Heart left ventricle (tissue), 16 donors: ENCODE measurements at regions of chr12 and their contacts with region 1.

Region 1: GRCh38 chr12:131290255-131290959 is 336.7 kb downstream of the ADGRD1 start:
- DNase-seq: no peak
- ATAC-seq: no peak
- H3K4me3 ChIP-seq: no peak overlapping the region
- H3K27ac ChIP-seq: no peak overlapping the region
- H3K4me1 ChIP-seq: no peaks in the 10 kb centered on the region
- H3K27me3 ChIP-seq: peaks cover 0 to 3% (median 0%) of the 10 kb centered on the region in 9 donors
- CTCF ChIP-seq: no peak
- POLR2A ChIP-seq: no peak

Region 2: DNA sequence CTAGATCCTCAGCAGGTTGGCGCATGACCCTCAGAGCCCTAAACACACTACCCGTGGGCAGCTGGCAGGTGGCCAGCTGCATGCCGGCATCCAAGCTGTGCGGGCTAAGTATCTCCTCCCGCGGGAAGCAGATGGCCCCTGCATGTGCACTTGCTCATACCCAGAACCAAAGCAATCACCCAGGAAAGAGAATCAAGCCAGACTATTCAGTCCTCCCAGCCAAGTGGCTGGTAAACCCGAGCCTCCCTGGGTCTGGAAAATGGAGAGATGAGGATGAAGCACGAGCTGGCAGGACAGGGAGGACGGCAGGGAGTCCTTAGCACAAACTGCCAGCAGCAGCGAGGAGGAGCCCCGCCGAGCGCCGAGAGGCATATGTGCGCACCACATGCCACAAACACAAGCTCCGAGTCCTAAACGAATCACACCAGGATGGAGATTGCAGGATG is 714.0 kb before region 1 on chr12:
- intact Hi-C with region 1: no loop called
- DNase-seq: no peak
- ATAC-seq: no peak
- H3K4me3 ChIP-seq: no peak overlapping the region
- H3K27ac ChIP-seq: no peak overlapping the region
- H3K4me1 ChIP-seq: no peaks in the 10 kb centered on the region
- H3K27me3 ChIP-seq: no peaks in the 10 kb centered on the region
- CTCF ChIP-seq: no peak
- POLR2A ChIP-seq: no peak

Region 3: GRCh38 chr12:131673888-131674257 is 383.5 kb after region 1 on chr12:
- intact Hi-C with region 1: loop called in 1 of 10 experiments (anchors 5 kb)
- DNase-seq: no peak
- ATAC-seq: no peak
- H3K4me3 ChIP-seq: no peak overlapping the region
- H3K27ac ChIP-seq: peak overlapping the region in 1 of 12 donors; percentile 79
- H3K4me1 ChIP-seq: peaks cover 0 to 8% (median 0%) of the 10 kb centered on the region in 12 donors
- H3K27me3 ChIP-seq: peaks cover 0 to 20% (median 4%) of the 10 kb centered on the region in 9 donors
- CTCF ChIP-seq: no peak
- POLR2A ChIP-seq: no peak

Region 4: GRCh38 chr12:131882779-131883520 is 592.5 kb after region 1 on chr12:
- intact Hi-C with region 1: no loop called
- DNase-seq: no peak
- ATAC-seq: peak in 1 of 4 donors; percentile 48
- H3K4me3 ChIP-seq: no peak overlapping the region
- H3K27ac ChIP-seq: no peak overlapping the region
- H3K4me1 ChIP-seq: peaks cover 0 to 25% (median 0%) of the 10 kb centered on the region in 12 donors
- H3K27me3 ChIP-seq: peaks cover 0 to 4% (median 0%) of the 10 kb centered on the region in 9 donors
- CTCF ChIP-seq: no peak
- POLR2A ChIP-seq: no peak

Region 5: GRCh38 chr12:132056951-132057350 is 766.5 kb after region 1 on chr12:
- intact Hi-C with region 1: no loop called
- DNase-seq: no peak
- ATAC-seq: no peak
- H3K4me3 ChIP-seq: no peak overlapping the region
- H3K27ac ChIP-seq: no peak overlapping the region
- H3K4me1 ChIP-seq: no peaks in the 10 kb centered on the region
- H3K27me3 ChIP-seq: no peaks in the 10 kb centered on the region
- CTCF ChIP-seq: no peak
- POLR2A ChIP-seq: no peak